GM13976 (cell line): ENCODE measurements at regions of chr16 and their contacts with region 1.

Region 1: DNA sequence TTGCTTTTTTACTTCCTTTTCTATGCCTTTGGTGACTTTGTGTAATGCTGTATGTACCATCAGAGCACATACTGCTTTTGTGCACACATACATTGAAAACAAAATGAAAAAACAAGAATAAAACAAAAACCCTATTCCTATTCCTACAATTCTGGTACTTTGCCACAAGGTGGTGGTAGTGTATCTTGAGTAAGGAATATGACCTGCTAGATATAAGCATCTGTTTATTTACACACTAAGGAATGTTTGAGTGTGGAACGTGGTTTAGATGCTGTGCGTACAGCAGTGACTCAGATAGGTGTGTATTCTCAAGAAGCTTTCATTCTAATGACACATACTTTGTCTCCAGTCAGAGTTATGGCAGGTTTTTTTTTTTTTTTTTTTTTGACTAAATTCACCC is 606.2 kb downstream of the WWOX start:
- DNase-seq: peak; percentile 24
- CTCF ChIP-seq: peak; percentile 45

Region 2: DNA sequence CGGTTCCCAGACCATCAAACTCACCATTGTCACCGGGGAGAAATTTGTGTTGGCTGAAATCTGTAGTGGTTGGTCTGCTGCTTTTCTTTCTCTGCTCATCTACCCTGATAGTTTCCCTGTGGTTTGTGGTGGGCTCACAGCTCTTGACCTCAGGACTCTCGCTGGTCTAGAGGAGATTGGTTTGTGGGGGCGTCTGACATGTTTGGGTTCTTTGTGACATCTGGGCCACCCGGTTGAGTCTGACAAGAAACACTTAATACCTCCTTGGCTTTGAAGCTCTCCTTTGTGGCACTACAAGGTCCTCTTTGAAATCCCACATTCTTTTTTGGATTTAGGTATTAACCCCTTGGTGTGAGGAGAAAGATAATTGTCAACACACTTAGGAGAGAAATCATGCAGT is 55.7 kb after region 1 on chr16:
- in situ Hi-C with region 1: loop called (anchors 10 kb)
- DNase-seq: peak; percentile 39
- CTCF ChIP-seq: no peak